AG04449 (cell line): ENCODE measurements at regions of chr1 and their contacts with region 1.

Region 1: GRCh38 chr1:240169188-240169587 is 77.5 kb downstream of the FMN2 start:
- DNase-seq: no peak
- H3K4me3 ChIP-seq: no peak overlapping the region
- CTCF ChIP-seq: no peak

Region 2: GRCh38 chr1:240027059-240027462 is 142.1 kb before region 1 on chr1:
- CTCF ChIA-PET with region 1: interaction called, 15 read pairs
- POLR2A ChIA-PET with region 1: no interaction called
- DNase-seq: no peak
- H3K4me3 ChIP-seq: no peak overlapping the region
- CTCF ChIP-seq: peak; percentile 80

Region 3: DNA sequence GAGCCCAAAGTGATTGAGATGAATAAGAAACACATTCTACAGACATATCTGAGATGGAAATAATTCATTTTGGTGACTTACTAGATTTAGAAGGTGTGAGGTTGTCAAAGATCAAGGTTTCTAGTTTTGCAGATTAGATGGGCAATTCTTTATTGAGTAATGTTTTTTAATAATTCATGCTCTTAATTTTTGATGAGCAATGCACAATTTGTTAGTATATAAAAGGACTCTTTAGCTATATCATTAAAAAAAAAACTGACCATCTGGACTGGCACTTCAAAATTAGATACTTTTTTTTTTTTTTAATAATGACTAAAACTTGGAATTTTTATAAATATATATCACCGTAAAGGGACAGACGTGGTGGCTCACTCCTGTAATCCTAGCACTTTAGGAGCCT is 13.6 kb before region 1 on chr1:
- CTCF ChIA-PET with region 1: interaction called, 146 read pairs
- POLR2A ChIA-PET with region 1: interaction called, 4 read pairs
- DNase-seq: no peak
- H3K4me3 ChIP-seq: no peak overlapping the region
- CTCF ChIP-seq: no peak